Activated T-helper 2 cell treated with anti-CD3 and anti-CD28 coated beads, Interferon-gamma antibody, Interleukin-2, Interleukin-4, amounts not matched to agents 10 μg/mL and 5 μg/mL and 100 μg/mL, durations not matched to agents 14 hours and 24 hours and 36 hours (primary cell): ENCODE measurements at regions of chr3 and their contacts with region 1.

Region 1: DNA sequence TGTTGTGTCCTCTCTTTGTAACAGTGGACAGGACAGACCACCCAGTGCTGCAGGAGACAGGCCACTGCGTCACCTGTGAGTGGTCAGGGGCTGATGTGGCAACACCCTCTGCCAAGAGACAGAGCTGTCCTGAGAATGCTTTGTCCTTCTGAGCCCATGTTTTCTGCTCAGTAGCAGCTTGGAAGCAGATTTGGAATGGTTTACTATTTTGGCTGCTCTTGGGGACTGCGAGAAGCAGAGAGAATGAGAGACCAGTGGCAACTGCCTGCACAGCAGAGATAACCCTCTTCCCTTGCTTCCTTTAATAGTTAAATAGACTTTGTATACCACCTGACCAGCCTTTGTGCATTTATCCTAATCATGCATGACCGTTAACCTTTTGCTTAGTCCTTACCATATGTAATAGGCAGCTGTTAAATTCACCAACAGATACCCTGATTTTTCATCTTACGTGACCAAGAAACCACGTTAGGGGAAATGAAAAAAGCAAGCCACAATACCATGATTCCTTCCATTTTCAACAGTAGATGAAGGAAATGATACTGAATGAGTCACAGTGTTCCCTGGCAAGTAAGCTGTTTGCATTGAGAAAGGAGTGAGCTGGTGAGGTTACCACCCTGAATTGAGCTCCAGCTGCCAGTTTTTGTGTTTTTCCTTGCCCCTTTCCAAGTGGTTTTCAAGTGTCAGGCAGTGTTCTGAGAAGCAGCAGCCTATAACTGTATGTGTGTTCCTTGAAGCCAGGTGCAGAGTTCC is 35.5 kb downstream of the B3GALNT1 start:
- DNase-seq: no peak
- H3K4me3 Mint-ChIP-seq: no peak overlapping the region
- H3K27ac Mint-ChIP-seq: no peak overlapping the region
- H3K4me1 Mint-ChIP-seq: peaks cover 31% of the 10 kb centered on the region
- H3K27me3 Mint-ChIP-seq: peaks cover 14% of the 10 kb centered on the region

Region 2: GRCh38 chr3:161035711-161036110 is 34.0 kb before region 1 on chr3:
- intact Hi-C with region 1: loop called (anchors 5 kb)
- DNase-seq: no peak
- H3K4me3 Mint-ChIP-seq: no peak overlapping the region
- H3K27ac Mint-ChIP-seq: no peak overlapping the region
- H3K4me1 Mint-ChIP-seq: peaks cover 15% of the 10 kb centered on the region
- H3K27me3 Mint-ChIP-seq: no peaks in the 10 kb centered on the region

Region 3: DNA sequence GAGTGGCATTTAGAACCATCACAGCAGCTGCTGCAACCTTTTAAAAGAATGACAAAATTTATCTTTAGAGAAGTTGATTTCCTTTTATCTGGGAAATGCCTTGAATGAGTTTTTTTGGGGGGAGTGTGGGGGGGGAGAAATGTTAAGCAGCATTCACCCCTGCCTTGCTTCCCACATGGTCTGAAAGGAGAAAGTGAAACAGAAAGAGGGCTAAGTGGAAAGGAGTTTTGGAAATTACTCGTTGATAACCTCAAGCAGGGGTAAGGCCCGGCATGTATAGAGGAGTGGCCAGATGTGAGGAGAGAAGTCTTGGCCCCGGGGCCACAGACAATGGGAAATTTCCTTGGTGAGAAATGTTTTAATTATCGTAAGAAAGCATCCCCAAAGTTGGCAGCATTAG is 11.9 kb after region 1 on chr3:
- intact Hi-C with region 1: loop called (anchors 1 kb)
- DNase-seq: no peak
- H3K4me3 Mint-ChIP-seq: no peak overlapping the region
- H3K27ac Mint-ChIP-seq: no peak overlapping the region
- H3K4me1 Mint-ChIP-seq: peaks cover 24% of the 10 kb centered on the region
- H3K27me3 Mint-ChIP-seq: peaks cover 26% of the 10 kb centered on the region

Region 4: DNA sequence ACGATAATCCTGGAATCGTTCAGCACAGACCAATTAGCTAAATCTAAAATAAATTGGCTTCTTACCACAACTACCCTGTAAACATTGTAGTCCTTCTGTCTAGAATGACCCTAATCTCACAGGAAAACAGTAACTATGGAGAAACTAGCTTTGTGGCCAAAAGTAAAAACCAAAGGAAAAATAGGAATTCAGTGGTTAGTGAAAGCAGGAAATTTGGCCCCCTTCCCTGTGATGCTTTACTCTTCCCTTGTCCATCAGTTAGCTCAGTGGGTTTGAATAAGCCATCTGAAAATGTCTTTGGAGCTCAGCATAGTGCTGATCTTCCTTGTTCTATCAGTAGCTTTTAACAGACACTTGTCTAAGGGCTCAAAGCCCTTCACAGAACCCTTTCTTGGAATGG is 153.0 kb after region 1 on chr3:
- intact Hi-C with region 1: no loop called
- DNase-seq: no peak
- H3K4me3 Mint-ChIP-seq: peak overlapping the region; percentile 94
- H3K27ac Mint-ChIP-seq: no peak overlapping the region
- H3K4me1 Mint-ChIP-seq: peaks cover 23% of the 10 kb centered on the region
- H3K27me3 Mint-ChIP-seq: peaks cover 2% of the 10 kb centered on the region